CD4-positive, alpha-beta memory T cell (primary cell): ENCODE measurements at regions of chr2 and their contacts with region 1.

Region 1: DNA sequence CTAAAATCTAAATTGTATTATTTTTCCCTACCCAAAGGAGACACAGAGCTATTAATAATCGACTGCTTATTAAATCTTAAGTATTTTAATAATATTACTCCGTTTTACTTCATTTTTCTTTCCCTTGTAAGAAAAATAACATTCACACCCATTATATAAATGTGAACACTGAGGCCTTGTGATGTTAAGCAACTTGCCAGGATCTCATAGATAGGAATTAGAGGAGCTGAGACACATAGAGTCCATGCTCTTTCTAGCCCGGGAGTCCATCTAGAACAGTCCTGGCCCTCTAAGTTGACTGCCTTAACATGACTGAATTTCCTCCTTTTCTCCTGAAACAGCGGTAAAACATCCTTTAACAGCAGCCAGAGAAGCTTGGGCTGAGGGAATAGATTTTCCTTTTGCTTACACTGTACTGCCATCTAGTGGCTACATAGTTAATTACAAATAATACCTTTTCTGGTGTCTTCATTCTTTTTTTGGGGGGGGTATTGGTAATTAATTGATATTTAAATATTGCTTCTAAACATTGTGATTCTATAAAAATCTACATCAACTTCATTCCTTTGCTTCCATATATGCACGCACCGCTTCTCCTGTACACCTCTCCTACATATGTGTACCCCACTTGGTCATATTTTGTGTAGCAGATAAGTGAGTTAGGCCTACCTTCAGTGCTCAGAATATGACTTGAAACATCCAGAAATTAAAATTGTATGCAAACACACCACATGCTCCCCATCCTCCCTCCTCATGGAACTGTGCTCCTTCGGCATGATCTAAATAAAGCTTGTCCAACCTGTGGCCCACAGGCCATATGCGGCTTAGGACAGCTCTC is 125.8 kb upstream of the HNMT start:
- DNase-seq: peak in 4 of 5 donors; percentile 27 to 43 (median 36)
- H3K4me3 ChIP-seq: no peak overlapping the region
- H3K4me3 Mint-ChIP-seq: no peak overlapping the region
- H3K27ac ChIP-seq: no peak overlapping the region
- H3K27ac Mint-ChIP-seq: no peak overlapping the region
- H3K4me1 ChIP-seq: no peaks in the 10 kb centered on the region
- H3K4me1 Mint-ChIP-seq: no peaks in the 10 kb centered on the region
- H3K27me3 ChIP-seq: no peaks in the 10 kb centered on the region
- H3K27me3 Mint-ChIP-seq: peaks cover 3 to 6% of the 10 kb centered on the region in 2 donors

Region 2: DNA sequence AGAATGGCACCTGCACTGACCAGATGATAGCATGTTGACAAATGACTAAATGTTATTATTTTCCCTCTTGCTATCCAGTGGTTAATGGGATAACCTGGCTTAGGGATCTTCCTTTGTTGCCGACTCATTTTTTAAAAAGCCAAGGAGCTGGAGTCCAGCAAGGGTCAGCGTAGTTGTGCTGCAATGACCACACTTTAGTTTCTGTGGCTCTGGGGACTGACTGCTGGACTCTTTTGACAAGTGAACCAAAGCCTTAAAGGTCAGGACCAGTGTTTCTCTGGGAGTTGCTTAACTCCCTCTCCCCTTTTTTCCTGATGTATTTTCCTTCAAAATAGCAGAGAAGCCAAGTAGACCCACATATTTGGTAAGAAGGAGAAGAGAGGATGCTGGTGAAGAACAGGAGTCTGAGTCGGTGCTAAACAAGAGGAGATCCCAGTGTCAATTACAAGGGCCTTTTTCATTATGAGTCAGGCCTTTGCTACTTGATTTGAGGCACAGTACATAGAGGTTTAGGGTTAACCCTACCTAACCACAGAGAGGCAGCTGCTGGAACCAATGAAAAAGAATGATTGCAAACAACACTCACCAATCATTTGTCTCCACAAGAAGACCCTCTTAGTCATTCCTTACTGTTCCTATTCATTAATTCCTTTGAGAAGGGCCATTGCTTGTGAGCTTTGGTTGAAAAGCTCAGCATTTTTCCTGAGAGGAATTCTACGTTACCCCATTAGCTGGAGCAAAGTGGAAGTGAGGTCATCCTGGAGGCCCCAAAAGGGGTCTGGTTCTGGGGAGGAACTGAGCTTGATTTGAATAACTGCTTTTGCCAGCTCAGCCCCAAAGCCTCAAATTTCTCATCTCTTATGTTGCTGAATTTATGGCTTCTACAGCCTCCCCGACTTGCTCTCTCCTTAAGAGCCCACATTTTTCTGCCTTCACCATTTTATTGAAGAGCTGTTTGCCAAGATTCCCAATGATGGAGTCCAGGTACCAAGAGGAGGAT is 11.8 kb before region 1 on chr2:
- CTCF ChIA-PET with region 1: interaction called, 39 read pairs
- POLR2A ChIA-PET with region 1: no interaction called
- intact Hi-C with region 1: no loop called
- DNase-seq: no peak
- H3K4me3 ChIP-seq: no peak overlapping the region
- H3K4me3 Mint-ChIP-seq: no peak overlapping the region
- H3K27ac ChIP-seq: no peak overlapping the region
- H3K27ac Mint-ChIP-seq: no peak overlapping the region
- H3K4me1 ChIP-seq: no peaks in the 10 kb centered on the region
- H3K4me1 Mint-ChIP-seq: no peaks in the 10 kb centered on the region
- H3K27me3 ChIP-seq: no peaks in the 10 kb centered on the region
- H3K27me3 Mint-ChIP-seq: peaks cover 5 to 9% of the 10 kb centered on the region in 2 donors